ENCODE measurements at regions of chr9 and their contacts with region 1.

Region 1: GRCh38 chr9:20426019-20426418 is 196.3 kb downstream of the MLLT3 start:
- DNase-seq: no peak
- ATAC-seq: no peak
- H3K4me3 ChIP-seq: no peak overlapping the region
- H3K4me3 Mint-ChIP-seq: no peak overlapping the region
- H3K27ac ChIP-seq: no peak overlapping the region
- H3K27ac Mint-ChIP-seq: peak overlapping the region in 1 of 9 donors; percentile 21
- H3K4me1 ChIP-seq: peaks cover 3 to 4% of the 10 kb centered on the region in 2 donors
- H3K4me1 Mint-ChIP-seq: peaks cover 17 to 75% (median 62%) of the 10 kb centered on the region in 7 donors
- H3K27me3 ChIP-seq: no peaks in the 10 kb centered on the region
- H3K27me3 Mint-ChIP-seq: no peaks in the 10 kb centered on the region

Region 2: DNA sequence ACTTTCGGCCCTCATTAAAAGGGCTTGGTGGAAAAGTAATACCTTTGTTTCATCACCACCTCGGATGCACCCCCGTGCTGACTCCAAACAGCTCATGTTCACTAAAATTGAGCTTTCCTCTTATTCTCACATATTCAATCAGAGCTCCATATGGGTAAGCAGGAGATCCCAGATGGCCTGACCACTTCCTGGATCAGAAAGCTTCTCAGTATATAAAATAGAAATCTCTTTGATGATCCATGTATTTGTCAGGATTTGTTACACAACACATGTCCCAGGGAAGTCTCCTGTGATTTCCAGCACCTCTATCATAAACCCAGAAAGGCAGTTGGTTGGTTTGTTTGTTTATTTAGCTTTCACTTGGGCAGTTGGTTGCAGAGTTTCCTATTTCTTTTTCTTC is 205.7 kb before region 1 on chr9:
- CTCF ChIA-PET with region 1: no interaction called
- POLR2A ChIA-PET with region 1: no interaction called
- intact Hi-C with region 1: no loop called
- DNase-seq: no peak
- ATAC-seq: no peak
- H3K4me3 ChIP-seq: no peak overlapping the region
- H3K4me3 Mint-ChIP-seq: no peak overlapping the region
- H3K27ac ChIP-seq: no peak overlapping the region
- H3K27ac Mint-ChIP-seq: no peak overlapping the region
- H3K4me1 ChIP-seq: no peaks in the 10 kb centered on the region
- H3K4me1 Mint-ChIP-seq: peaks cover 10 to 43% (median 27%) of the 10 kb centered on the region in 7 donors
- H3K27me3 ChIP-seq: no peaks in the 10 kb centered on the region
- H3K27me3 Mint-ChIP-seq: peaks cover 0 to 4% (median 0%) of the 10 kb centered on the region in 5 donors

Region 3: DNA sequence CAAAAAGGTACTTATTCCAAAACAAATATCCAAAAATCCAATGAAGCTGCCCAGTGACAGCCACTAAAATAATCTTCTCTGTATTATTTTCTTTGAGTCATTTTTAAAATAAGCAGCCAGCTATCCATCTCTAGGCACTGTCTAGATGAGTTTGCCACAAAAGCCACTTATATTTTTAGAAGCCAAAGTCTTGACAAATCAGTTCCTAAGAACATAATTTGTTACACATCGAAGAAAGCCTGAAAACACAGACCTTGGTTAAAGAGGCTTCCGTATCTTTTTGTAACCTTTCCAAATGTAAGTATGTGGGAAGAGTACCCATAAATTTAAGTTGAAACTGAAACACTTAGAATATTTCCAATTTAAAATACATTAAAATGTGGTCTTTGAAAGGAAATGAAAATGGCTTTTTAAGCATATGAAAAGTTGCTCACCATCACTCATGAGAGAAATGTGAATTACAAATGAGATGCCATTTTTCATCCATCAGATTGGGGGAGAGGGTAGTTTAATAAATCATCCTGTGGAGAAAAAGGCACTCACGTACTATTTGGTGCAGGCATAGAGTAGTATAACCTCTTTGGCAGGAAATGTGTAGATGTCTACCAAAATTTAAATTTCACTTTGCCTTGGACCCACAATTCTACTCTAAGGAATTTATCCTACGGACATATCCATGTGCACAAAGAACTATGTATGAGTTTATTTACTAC is 15.8 kb after region 1 on chr9:
- CTCF ChIA-PET with region 1: interaction called, 3 read pairs
- POLR2A ChIA-PET with region 1: interaction called, 4 read pairs
- intact Hi-C with region 1: loop called in 1 of 2 experiments (anchors 2 kb)
- DNase-seq: no peak
- ATAC-seq: no peak
- H3K4me3 ChIP-seq: no peak overlapping the region
- H3K4me3 Mint-ChIP-seq: peak overlapping the region in 8 of 10 donors; percentile 4 to 64 (median 34)
- H3K27ac ChIP-seq: no peak overlapping the region
- H3K27ac Mint-ChIP-seq: peak overlapping the region in 5 of 9 donors; percentile 11 to 50 (median 14)
- H3K4me1 ChIP-seq: peaks cover 0 to 9% of the 10 kb centered on the region in 2 donors
- H3K4me1 Mint-ChIP-seq: peaks cover 23 to 79% (median 65%) of the 10 kb centered on the region in 7 donors
- H3K27me3 ChIP-seq: no peaks in the 10 kb centered on the region
- H3K27me3 Mint-ChIP-seq: no peaks in the 10 kb centered on the region

Region 4: GRCh38 chr9:20462410-20462809 is 36.4 kb after region 1 on chr9:
- CTCF ChIA-PET with region 1: no interaction called
- POLR2A ChIA-PET with region 1: no interaction called
- intact Hi-C with region 1: loop called in 1 of 2 experiments (anchors 5 kb)
- DNase-seq: no peak
- ATAC-seq: no peak
- H3K4me3 ChIP-seq: no peak overlapping the region
- H3K4me3 Mint-ChIP-seq: peak overlapping the region in 3 of 10 donors; percentile 16 to 31 (median 17)
- H3K27ac ChIP-seq: no peak overlapping the region
- H3K27ac Mint-ChIP-seq: peak overlapping the region in 1 of 9 donors; percentile 3
- H3K4me1 ChIP-seq: peaks cover 0 to 31% of the 10 kb centered on the region in 2 donors
- H3K4me1 Mint-ChIP-seq: peaks cover 43 to 89% (median 81%) of the 10 kb centered on the region in 7 donors
- H3K27me3 ChIP-seq: no peaks in the 10 kb centered on the region
- H3K27me3 Mint-ChIP-seq: no peaks in the 10 kb centered on the region

Region 5: GRCh38 chr9:20479419-20480155 is 53.6 kb after region 1 on chr9:
- CTCF ChIA-PET with region 1: no interaction called
- POLR2A ChIA-PET with region 1: no interaction called
- intact Hi-C with region 1: loop called in 1 of 2 experiments (anchors 5 kb)
- DNase-seq: no peak
- ATAC-seq: no peak
- H3K4me3 ChIP-seq: no peak overlapping the region
- H3K4me3 Mint-ChIP-seq: no peak overlapping the region
- H3K27ac ChIP-seq: no peak overlapping the region
- H3K27ac Mint-ChIP-seq: peak overlapping the region in 1 of 9 donors; percentile 60
- H3K4me1 ChIP-seq: peaks cover 0 to 10% of the 10 kb centered on the region in 2 donors
- H3K4me1 Mint-ChIP-seq: peaks cover 23 to 89% (median 77%) of the 10 kb centered on the region in 7 donors
- H3K27me3 ChIP-seq: no peaks in the 10 kb centered on the region
- H3K27me3 Mint-ChIP-seq: no peaks in the 10 kb centered on the region

Region 6: GRCh38 chr9:20728493-20729220 is 302.6 kb after region 1 on chr9:
- CTCF ChIA-PET with region 1: no interaction called
- POLR2A ChIA-PET with region 1: no interaction called
- intact Hi-C with region 1: loop called in 1 of 2 experiments (anchors 5 kb)
- DNase-seq: no peak
- ATAC-seq: no peak
- H3K4me3 ChIP-seq: no peak overlapping the region
- H3K4me3 Mint-ChIP-seq: no peak overlapping the region
- H3K27ac ChIP-seq: no peak overlapping the region
- H3K27ac Mint-ChIP-seq: no peak overlapping the region
- H3K4me1 ChIP-seq: no peaks in the 10 kb centered on the region
- H3K4me1 Mint-ChIP-seq: peaks cover 17 to 37% (median 28%) of the 10 kb centered on the region in 7 donors
- H3K27me3 ChIP-seq: no peaks in the 10 kb centered on the region
- H3K27me3 Mint-ChIP-seq: no peaks in the 10 kb centered on the region

Region 7: GRCh38 chr9:21078717-21079116 is 652.7 kb after region 1 on chr9:
- CTCF ChIA-PET with region 1: no interaction called
- POLR2A ChIA-PET with region 1: no interaction called
- intact Hi-C with region 1: no loop called
- DNase-seq: peak in 3 of 9 donors; percentile 2 to 19 (median 8)
- ATAC-seq: peak; percentile 42
- H3K4me3 ChIP-seq: no peak overlapping the region
- H3K4me3 Mint-ChIP-seq: peak overlapping the region in 1 of 10 donors; percentile 26
- H3K27ac ChIP-seq: no peak overlapping the region
- H3K27ac Mint-ChIP-seq: peak overlapping the region in 4 of 9 donors; percentile 15 to 42 (median 31)
- H3K4me1 ChIP-seq: peaks cover 0 to 18% of the 10 kb centered on the region in 2 donors
- H3K4me1 Mint-ChIP-seq: peaks cover 23 to 40% (median 35%) of the 10 kb centered on the region in 7 donors
- H3K27me3 ChIP-seq: no peaks in the 10 kb centered on the region
- H3K27me3 Mint-ChIP-seq: peaks cover 0 to 20% (median 0%) of the 10 kb centered on the region in 5 donors